Cardiac septum (tissue), 1 donor: ENCODE measurements at regions of chr1 and their contacts with region 1.

Region 1: DNA sequence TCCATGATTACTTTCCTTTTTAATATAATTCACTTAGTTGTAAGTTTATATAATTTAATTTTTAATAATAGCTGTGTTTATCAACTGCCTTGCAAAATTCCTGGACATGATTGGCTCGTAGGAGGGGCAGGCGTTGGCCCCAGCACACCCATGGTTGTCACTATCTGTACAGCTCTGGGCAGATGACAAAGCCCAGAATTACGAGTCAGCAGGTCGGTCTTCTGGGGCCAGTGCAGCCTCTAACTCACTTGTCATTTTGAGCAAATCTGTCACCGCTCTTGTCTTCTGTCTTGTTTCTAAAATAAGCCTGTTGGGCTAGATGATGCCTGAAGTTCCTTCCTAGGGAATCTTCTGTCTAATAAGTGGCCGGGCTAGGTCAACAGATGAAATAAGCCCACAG is 21.4 kb upstream of the LRRC38 start:
- DNase-seq: no peak

Region 2: DNA sequence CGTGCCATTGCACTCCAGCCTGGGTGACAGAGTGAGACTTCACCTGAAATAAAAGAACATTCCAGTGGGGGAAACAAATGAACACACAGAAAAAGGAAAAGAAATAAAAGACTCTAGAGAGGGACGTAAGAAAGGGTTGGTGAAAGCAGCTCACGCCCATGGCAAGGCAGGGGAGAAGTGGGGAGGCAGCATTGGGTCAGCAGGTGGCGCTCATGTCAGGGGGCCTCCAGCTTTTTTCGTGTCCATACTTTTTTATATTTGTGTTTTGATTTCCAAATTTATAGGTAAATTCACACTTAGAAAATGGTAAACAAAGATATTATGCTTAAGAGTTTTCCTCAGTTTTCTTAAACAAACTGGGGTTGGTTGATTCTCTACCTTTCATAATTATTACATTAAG is 1259.9 kb before region 1 on chr1:
- intact Hi-C with region 1: no loop called
- DNase-seq: no peak

Region 3: DNA sequence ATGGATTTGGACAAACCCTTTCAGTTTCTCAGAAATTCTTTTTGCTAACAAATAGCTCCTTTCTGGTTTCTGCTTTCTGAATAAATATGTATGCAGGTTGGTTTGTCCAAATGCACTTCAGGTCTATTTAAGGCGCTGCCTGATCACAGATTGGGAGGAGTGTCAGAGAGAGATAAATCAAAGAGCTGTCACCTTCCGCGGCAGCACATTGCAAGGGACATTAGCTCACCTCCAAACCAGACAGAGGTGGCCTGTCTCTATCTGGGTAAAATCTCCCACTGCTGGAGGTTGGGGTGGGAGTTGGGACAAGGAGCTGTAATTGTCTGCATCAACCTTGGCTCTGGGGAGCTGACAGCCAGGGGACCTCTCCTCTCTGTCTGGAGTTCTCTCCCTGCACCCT is 99.8 kb before region 1 on chr1:
- intact Hi-C with region 1: no loop called
- DNase-seq: no peak

Region 4: GRCh38 chr1:13487143-13487868 is 47.9 kb before region 1 on chr1:
- intact Hi-C with region 1: loop called (anchors 1 kb)
- DNase-seq: peak; percentile 75